Aorta (tissue), 5 donors: ENCODE measurements at regions of chr12 and their contacts with region 1.

Region 1: GRCh38 chr12:54259194-54260011 is 20.5 kb downstream of the CBX5 start:
- DNase-seq: peak; percentile 85 to 89
- ATAC-seq: peak; percentile 94
- H3K4me3 ChIP-seq: peak overlapping the region; percentile 18 to 22
- H3K27ac ChIP-seq: peak overlapping the region; percentile 52 to 87
- H3K4me1 ChIP-seq: peaks cover 0 to 1% of the 10 kb centered on the region in 2 donors
- H3K27me3 ChIP-seq: no peaks in the 10 kb centered on the region

Region 2: DNA sequence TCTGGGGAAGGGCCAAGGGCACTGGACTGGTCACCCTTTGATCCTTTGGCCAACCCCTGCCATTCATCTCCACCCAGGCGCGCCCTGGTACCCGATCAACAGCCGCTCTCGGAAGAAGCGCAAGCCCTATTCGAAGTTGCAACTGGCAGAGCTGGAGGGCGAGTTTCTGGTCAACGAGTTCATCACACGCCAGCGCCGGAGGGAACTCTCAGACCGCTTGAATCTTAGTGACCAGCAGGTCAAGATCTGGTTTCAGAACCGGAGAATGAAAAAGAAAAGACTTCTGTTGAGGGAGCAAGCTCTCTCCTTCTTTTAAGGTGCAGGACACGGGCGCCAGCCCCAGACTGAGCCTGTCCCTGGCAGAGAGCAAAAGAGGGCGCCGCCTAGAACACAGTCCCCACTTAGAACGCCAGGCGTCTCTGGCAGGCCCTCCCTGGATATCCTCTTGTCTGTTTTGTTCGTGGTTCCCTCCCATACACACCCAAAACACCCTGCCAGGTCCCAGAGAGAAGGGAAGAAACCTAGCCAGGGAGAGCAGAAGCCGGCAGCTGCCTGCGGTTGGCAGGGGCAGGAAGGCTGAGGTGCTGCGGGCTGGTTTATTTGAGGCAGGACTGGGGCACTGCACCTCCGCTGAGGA is 303.0 kb before region 1 on chr12:
- intact Hi-C with region 1: no loop called
- DNase-seq: peak in 1 of 2 donors; percentile 58
- ATAC-seq: no peak
- H3K4me3 ChIP-seq: no peak overlapping the region
- H3K27ac ChIP-seq: no peak overlapping the region
- H3K4me1 ChIP-seq: no peaks in the 10 kb centered on the region
- H3K27me3 ChIP-seq: peaks cover 0 to 1% of the 10 kb centered on the region in 2 donors

Region 3: GRCh38 chr12:54214553-54215406 is 44.6 kb before region 1 on chr12:
- intact Hi-C with region 1: loop called in 1 of 2 experiments (anchors 5 kb)
- DNase-seq: peak; percentile 93 to 96
- ATAC-seq: peak; percentile 93
- H3K4me3 ChIP-seq: no peak overlapping the region
- H3K27ac ChIP-seq: no peak overlapping the region
- H3K4me1 ChIP-seq: no peaks in the 10 kb centered on the region
- H3K27me3 ChIP-seq: no peaks in the 10 kb centered on the region

Region 4: DNA sequence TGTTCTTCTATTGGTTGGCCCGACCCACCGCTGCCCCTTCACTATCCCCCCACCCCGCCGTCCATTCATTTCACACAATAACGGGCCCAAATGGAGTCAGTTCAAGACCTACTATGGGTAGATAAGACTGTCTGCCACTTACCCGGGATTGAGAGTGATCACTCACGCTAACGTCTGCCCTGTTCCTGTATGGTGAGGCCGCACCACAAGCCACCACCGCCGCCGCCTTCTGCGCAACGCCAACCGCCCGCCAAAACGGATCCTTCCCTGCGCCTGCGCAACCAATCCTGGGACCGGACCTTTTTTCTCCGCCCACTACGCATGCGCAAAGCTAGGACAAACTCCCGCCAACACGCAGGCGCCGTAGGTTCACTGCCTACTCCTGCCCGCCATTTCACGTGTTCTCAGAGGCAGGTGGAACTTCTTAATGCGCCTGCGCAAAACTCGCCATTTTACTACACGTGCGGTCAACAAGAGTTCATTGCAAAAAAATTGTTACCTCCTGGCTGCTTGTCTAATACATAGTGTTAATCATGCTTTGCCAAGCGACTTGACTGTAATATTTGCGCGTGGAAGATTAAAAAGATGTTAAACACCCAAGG is 20.6 kb after region 1 on chr12 and contains the start of gene CBX5:
- intact Hi-C with region 1: loop called in 1 of 2 experiments (anchors 2 kb)
- DNase-seq: peak; percentile 100
- ATAC-seq: peak; percentile 94
- H3K4me3 ChIP-seq: peak within 1 kb of the TSS; percentile 80 to 99
- H3K27ac ChIP-seq: peak within 1 kb of the TSS; percentile 46 to 93
- H3K4me1 ChIP-seq: no peaks in the 10 kb centered on the region
- H3K27me3 ChIP-seq: no peaks in the 10 kb centered on the region
- total RNA-seq, gene CBX5: 66.8 to 67.8 TPM

Region 5: GRCh38 chr12:54300732-54301427 is 41.5 kb after region 1 on chr12 and contains the start of gene NFE2:
- intact Hi-C with region 1: no loop called
- DNase-seq: peak; percentile 71 to 88
- ATAC-seq: peak; percentile 78
- H3K4me3 ChIP-seq: no peak within 1 kb of the TSS
- H3K27ac ChIP-seq: no peak within 1 kb of the TSS
- H3K4me1 ChIP-seq: no peaks in the 10 kb centered on the region
- H3K27me3 ChIP-seq: peaks cover 0 to 1% of the 10 kb centered on the region in 2 donors
- total RNA-seq, gene NFE2: 3.2 to 3.3 TPM

Region 6: GRCh38 chr12:54368709-54369583 is 109.5 kb after region 1 on chr12:
- intact Hi-C with region 1: loop called (anchors 10 kb)
- DNase-seq: peak; percentile 95 to 98
- ATAC-seq: peak; percentile 86
- H3K4me3 ChIP-seq: no peak overlapping the region
- H3K27ac ChIP-seq: no peak overlapping the region
- H3K4me1 ChIP-seq: no peaks in the 10 kb centered on the region
- H3K27me3 ChIP-seq: no peaks in the 10 kb centered on the region